ENCODE measurements at regions of chr6 and their contacts with region 1.

Region 1: DNA sequence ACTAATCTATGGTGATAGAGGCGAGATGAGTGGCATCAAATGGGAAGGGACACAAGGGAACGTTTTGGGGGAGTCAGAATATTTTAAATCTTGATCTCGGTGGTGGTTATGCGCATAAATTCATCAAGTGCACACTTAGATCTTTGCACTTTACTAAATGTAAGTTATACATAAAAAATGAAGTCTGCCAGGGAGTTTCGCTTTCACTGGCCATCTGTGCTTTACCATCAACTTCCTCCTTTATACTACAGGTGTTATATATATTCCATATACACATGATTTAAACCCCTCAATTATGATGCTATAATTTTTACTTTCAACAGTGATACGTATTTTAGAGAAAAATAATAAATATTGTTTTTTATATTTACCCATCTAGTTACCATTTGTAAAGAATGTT is 97.6 kb upstream of the AKIRIN2 start:
- DNase-seq: no peak
- ATAC-seq: no peak
- H3K4me3 ChIP-seq: no peak overlapping the region
- H3K27ac ChIP-seq: no peak overlapping the region
- H3K4me1 ChIP-seq: no peaks in the 10 kb centered on the region
- H3K27me3 ChIP-seq: no peaks in the 10 kb centered on the region
- CTCF ChIP-seq: no peak
- POLR2A ChIP-seq: no peak

Region 2: DNA sequence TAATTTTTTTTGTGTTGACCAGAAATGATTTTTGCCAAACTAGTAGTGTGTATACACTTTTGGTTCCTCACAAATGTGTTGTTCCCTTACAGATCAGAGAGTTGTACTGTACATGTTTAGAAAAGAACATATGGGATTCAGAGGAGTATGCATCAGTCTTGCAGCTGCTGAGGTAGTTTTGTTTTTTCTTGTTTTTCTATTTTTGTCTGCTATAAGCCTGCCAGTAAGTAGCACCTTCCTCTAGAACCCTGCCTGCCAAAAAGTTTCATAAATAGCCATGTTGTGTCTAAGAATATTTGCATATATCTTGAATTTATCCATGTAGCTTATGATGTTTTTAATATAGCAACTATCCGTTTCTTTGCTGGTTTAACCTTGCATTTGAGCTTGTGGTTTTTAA is 163.3 kb before region 1 on chr6:
- intact Hi-C with region 1: loop called in 1 of 10 experiments (anchors 10 kb)
- DNase-seq: no peak
- ATAC-seq: no peak
- H3K4me3 ChIP-seq: no peak overlapping the region
- H3K27ac ChIP-seq: no peak overlapping the region
- H3K4me1 ChIP-seq: peaks cover 0 to 2% (median 0%) of the 10 kb centered on the region in 12 donors
- H3K27me3 ChIP-seq: no peaks in the 10 kb centered on the region
- CTCF ChIP-seq: no peak
- POLR2A ChIP-seq: no peak

Region 3: DNA sequence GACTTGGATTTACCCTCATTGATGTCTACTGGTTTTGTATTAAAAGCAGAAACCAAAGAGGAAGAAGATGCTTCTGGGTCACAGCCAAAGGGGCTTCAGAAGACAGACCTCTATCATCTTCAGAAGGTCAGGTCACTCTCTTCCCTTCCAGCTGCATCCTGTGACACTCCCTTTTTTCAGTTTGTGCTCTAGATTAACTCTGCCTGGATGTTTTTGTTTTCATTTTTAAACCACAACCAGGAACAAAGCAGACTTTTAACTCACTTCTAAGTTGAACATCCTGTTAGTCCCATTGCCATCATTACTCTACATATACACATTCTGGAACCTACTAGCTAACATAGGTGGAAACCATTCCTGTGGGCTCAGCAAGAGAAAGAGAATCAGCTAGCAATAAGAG is 142.8 kb before region 1 on chr6:
- intact Hi-C with region 1: loop called in 1 of 10 experiments (anchors 10 kb)
- DNase-seq: no peak
- ATAC-seq: no peak
- H3K4me3 ChIP-seq: no peak overlapping the region
- H3K27ac ChIP-seq: no peak overlapping the region
- H3K4me1 ChIP-seq: peaks cover 0 to 18% (median 0%) of the 10 kb centered on the region in 12 donors
- H3K27me3 ChIP-seq: no peaks in the 10 kb centered on the region
- CTCF ChIP-seq: no peak
- POLR2A ChIP-seq: no peak